ENCODE measurements at regions of chr3 and their contacts with region 1.

Region 1: DNA sequence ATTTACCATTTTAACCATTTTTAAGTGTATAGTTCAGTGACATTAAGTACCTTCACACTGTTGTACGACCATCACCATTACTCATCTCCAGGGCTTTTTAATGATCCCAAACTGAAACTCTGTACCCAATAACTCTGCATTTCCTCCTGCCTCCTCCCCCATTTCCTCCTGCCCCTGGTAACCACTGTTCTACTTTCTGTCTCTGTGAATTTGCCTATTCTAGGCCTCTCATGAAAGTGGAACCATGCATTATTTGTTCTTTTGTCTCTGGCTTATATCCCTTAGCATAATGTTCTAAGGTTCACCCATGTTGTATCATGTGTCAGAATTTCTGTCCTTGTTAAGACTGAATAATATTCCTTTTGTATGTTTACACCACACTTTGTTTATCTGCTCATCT is 154.2 kb downstream of the MECOM start:
- DNase-seq: no peak
- ATAC-seq: no peak
- H3K4me3 ChIP-seq: no peak overlapping the region
- H3K27ac ChIP-seq: peak overlapping the region in 2 of 4 donors; percentile 41 to 53
- H3K4me1 ChIP-seq: no peaks in the 10 kb centered on the region
- H3K27me3 ChIP-seq: no peaks in the 10 kb centered on the region
- CTCF ChIP-seq: no peak
- POLR2A ChIP-seq: no peak

Region 2: DNA sequence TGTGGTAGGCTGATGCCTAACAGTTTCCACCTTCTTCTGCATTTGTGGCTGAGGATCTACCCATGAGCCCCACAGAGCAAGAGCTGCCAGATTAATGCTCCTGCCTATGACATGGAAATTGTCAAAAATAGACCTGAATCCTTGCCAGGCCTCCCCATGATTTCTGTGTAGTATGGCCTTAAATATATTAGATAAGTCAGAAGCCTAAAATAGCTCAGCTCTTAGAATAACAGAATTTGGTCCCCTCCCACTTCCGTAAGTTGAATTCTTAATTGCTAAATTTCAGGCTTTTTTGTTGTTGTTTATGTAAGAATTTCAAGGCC is 1644.8 kb before region 1 on chr3:
- in situ Hi-C with region 1: no loop called
- intact Hi-C with region 1: no loop called
- DNase-seq: no peak
- ATAC-seq: peak; percentile 39 to 56
- H3K4me3 ChIP-seq: peak overlapping the region in 3 of 4 donors; percentile 15 to 29 (median 26)
- H3K27ac ChIP-seq: peak overlapping the region; percentile 48 to 72 (median 67)
- H3K4me1 ChIP-seq: peaks cover 2 to 11% of the 10 kb centered on the region in 2 donors
- H3K27me3 ChIP-seq: no peaks in the 10 kb centered on the region
- CTCF ChIP-seq: no peak
- POLR2A ChIP-seq: no peak

Region 3: DNA sequence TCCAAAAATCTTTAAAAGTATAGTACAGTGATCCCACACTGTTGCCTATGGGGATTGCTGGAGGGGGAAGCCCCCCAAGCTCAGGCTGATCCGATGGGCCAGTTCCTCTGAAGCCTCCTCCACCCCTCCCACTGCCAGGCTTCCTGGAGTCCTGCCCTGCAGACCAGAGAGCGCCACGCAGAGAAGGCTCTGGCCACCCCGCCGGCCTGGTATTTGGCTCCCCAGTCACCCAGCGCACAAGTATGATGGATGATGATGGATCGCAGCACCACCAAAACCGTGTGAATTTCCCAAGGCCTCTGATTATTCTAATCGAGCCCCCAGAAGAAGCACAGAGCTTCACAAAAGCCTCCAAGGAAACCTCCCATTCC is 104.9 kb before region 1 on chr3:
- in situ Hi-C with region 1: loop called in 1 of 4 experiments (anchors 25 kb)
- intact Hi-C with region 1: no loop called
- DNase-seq: no peak
- ATAC-seq: no peak
- H3K4me3 ChIP-seq: no peak overlapping the region
- H3K27ac ChIP-seq: no peak overlapping the region
- H3K4me1 ChIP-seq: no peaks in the 10 kb centered on the region
- H3K27me3 ChIP-seq: no peaks in the 10 kb centered on the region
- CTCF ChIP-seq: no peak
- POLR2A ChIP-seq: no peak

Measured in gastrocnemius medialis (tissue), 4 donors.